ENCODE measurements at regions of chr10 and their contacts with region 1.

Region 1: DNA sequence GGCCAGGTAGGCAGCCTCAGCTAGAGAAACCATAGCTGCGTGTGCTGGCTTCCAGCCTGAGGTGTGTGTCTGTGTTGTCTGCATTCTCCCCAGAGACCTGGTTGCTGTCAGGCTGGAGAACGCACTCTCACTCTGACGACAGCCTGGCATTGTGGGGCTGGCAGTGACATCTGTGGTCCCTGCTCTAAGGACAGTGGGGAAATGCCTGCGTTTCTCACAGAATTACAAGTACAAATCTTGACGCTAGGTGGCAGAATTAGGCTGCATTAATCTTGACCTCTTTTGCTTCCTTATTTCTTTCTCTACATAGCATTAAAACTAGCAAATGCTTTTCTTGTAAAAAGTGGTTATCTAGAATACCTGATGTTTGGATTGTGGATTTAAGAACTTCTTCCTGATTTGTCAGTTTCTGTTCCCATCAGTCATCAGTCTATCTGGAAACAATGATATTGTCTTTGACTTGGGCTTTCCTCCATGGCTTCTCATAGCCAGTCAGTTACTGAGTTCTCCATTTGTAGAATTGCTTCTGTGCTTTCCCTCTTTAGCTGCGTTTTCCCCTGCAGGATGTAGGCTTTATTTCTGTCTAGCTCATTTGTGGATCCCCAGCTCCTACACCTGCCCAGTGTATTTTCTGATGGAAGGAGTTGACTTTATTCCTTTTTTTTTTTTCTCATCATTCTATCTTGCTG is 86.0 kb downstream of the FANK1 start:
- DNase-seq: peak; percentile 74
- ATAC-seq: peak; percentile 90
- H3K4me3 ChIP-seq: no peak overlapping the region
- H3K27ac ChIP-seq: no peak overlapping the region
- H3K4me1 ChIP-seq: no peaks in the 10 kb centered on the region
- H3K27me3 ChIP-seq: peaks cover 20% of the 10 kb centered on the region; the same call in 1 of the 2 replicates
- CTCF ChIP-seq: peak; percentile 71
- POLR2A ChIP-seq: no peak
- RAD21 ChIP-seq: peak; percentile 92

Region 2: DNA sequence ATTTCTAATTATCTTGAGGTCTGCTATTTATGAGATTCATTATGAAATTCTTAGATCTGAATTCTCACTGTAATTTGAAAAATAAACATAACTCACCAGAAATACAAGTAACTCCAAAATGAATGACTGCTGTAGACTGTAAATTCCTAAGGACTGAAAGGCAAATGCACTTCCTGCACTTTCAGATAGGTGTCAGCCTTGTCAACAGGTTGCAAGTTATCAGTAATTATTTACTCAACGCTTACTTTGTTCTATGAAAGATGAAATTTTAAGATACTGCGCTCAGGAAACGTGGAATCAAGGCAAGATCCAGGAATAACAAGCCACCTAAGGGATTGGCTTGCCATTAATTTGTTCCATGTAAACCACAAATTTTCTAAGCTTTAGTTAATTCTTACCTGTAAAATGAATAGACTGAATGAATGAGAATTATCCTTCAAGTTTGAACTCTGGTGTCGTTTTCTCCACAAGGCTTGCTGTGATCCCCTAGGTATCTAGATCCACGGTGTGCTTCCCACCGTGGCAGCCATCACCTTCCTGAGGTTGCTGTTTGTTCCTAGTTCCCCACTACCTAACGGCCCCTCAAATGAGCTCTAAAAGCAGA is 113.9 kb before region 1 on chr10:
- CTCF ChIA-PET with region 1: no interaction called
- POLR2A ChIA-PET with region 1: no interaction called
- dilution Hi-C with region 1: no loop called
- in situ Hi-C with region 1: no loop called
- intact Hi-C with region 1: loop called (anchors 5 kb)
- DNase-seq: peak; percentile 65
- ATAC-seq: peak; percentile 44; the same call in 1 of the 2 replicates
- H3K4me3 ChIP-seq: no peak overlapping the region
- H3K27ac ChIP-seq: no peak overlapping the region
- H3K4me1 ChIP-seq: peaks cover 13% of the 10 kb centered on the region
- H3K27me3 ChIP-seq: no peaks in the 10 kb centered on the region
- CTCF ChIP-seq: peak; percentile 75
- POLR2A ChIP-seq: no peak
- RAD21 ChIP-seq: peak; percentile 87

Region 3: GRCh38 chr10:126160971-126161659 is 178.7 kb after region 1 on chr10:
- CTCF ChIA-PET with region 1: interaction called, 5 read pairs
- POLR2A ChIA-PET with region 1: no interaction called
- dilution Hi-C with region 1: no loop called
- in situ Hi-C with region 1: no loop called
- intact Hi-C with region 1: loop called (anchors 2 kb)
- DNase-seq: peak; percentile 37
- ATAC-seq: 0 out of 2 replicates have a peak, but pooled peaks have one; percentile 37
- H3K4me3 ChIP-seq: no peak overlapping the region
- H3K27ac ChIP-seq: no peak overlapping the region
- H3K4me1 ChIP-seq: no peaks in the 10 kb centered on the region
- H3K27me3 ChIP-seq: peaks cover 10% of the 10 kb centered on the region
- CTCF ChIP-seq: peak; percentile 43
- POLR2A ChIP-seq: no peak
- RAD21 ChIP-seq: peak; percentile 60

Region 4: GRCh38 chr10:126302826-126303665 is 320.6 kb after region 1 on chr10:
- CTCF ChIA-PET with region 1: no interaction called
- POLR2A ChIA-PET with region 1: no interaction called
- dilution Hi-C with region 1: no loop called
- in situ Hi-C with region 1: no loop called
- intact Hi-C with region 1: loop called (anchors 2 kb)
- DNase-seq: peak; percentile 4
- ATAC-seq: no peak
- H3K4me3 ChIP-seq: no peak overlapping the region
- H3K27ac ChIP-seq: no peak overlapping the region
- H3K4me1 ChIP-seq: no peaks in the 10 kb centered on the region
- H3K27me3 ChIP-seq: no peaks in the 10 kb centered on the region; the same call in 1 of the 2 replicates
- CTCF ChIP-seq: peak; percentile 30
- POLR2A ChIP-seq: no peak
- RAD21 ChIP-seq: peak; percentile 49

Region 5: DNA sequence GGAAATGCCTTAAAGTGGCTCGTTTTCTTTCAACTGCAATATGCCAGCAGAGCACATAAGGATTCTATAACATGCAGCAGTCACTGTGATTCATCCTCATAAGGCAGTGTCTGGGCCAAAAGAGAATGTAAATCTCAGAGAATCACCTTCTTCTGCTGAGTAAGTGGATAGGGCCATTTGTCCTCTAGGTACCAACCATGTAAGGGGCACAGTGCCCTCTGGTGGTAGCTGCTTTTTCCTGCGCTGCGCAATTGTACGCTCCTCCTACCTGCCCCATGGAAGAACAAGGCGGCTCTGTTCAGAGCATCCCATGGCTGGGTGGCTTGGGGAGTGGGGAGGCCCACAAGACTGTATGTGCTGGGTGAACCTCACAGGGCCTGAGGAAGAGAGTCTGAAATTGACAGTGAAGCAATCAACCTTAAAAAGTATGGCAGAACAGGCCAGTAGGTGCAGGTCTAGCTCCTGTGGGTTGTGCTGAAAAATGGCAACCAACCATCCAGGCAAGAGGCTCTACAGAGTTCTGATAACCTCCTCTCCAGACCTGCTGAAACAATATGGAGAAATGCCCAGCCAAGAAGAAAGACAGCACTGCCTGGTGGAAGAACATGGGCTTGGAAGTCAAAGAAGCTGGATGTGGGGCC is 766.7 kb after region 1 on chr10:
- CTCF ChIA-PET with region 1: interaction called, 3 read pairs
- POLR2A ChIA-PET with region 1: no interaction called
- dilution Hi-C with region 1: no loop called
- in situ Hi-C with region 1: no loop called
- intact Hi-C with region 1: loop called (anchors 1 kb)
- DNase-seq: peak; percentile 75
- ATAC-seq: peak; percentile 99
- H3K4me3 ChIP-seq: no peak overlapping the region
- H3K27ac ChIP-seq: no peak overlapping the region
- H3K4me1 ChIP-seq: no peaks in the 10 kb centered on the region
- H3K27me3 ChIP-seq: no peaks in the 10 kb centered on the region
- CTCF ChIP-seq: peak; percentile 75
- POLR2A ChIP-seq: no peak
- RAD21 ChIP-seq: peak; percentile 78

Region 6: DNA sequence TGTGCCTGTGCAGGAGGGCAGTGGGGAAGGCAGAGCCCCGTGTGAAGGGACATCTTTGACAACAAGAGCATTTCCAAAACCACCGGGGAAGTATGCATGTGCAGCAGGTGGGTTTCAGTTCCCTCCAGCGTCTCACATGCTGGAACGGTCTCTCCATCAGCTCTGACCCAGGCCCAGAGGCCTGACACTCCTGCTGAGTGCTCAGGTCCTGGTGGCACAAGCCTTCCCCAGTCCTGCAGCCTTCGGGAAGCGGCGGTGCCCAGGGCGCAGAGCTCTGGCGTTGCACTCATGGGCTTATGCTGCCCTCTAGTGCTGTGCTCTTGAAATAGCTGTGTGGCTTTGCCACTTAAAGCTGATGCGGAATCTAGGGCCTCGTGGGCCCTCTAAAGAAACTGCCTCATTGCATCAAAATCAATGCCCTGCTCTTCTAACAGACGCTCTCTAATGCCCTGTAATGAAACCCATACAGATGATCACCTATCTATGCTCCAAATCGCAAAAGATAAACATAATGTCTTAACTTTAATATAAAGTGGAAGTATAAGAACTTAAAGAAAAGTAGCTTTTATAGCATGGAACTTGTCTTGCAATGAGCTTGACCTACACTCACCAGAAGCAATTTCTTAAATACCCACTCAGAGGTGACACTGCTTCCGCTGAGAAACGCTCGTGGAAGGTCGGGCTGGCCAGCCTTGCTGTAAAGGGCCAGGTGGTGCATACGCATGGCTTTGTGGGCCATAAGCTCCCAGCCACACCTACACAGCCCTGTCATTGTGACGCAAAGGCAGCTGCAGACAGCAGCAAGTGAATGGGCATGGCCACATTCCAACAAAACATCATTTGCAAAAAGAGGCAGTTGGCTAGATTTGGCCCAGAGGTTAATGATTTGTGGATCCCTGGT is 1871.7 kb after region 1 on chr10:
- CTCF ChIA-PET with region 1: no interaction called
- POLR2A ChIA-PET with region 1: no interaction called
- dilution Hi-C with region 1: no loop called
- in situ Hi-C with region 1: no loop called
- intact Hi-C with region 1: loop called (anchors 5 kb)
- DNase-seq: peak; percentile 47
- ATAC-seq: peak; percentile 99
- H3K4me3 ChIP-seq: no peak overlapping the region
- H3K27ac ChIP-seq: no peak overlapping the region
- H3K4me1 ChIP-seq: no peaks in the 10 kb centered on the region
- H3K27me3 ChIP-seq: no peaks in the 10 kb centered on the region
- CTCF ChIP-seq: peak; percentile 62
- POLR2A ChIP-seq: no peak
- RAD21 ChIP-seq: peak; percentile 77

Measured in IMR-90 (cell line).